ENCODE measurements at regions of chr15 and their contacts with region 1.

Region 1: DNA sequence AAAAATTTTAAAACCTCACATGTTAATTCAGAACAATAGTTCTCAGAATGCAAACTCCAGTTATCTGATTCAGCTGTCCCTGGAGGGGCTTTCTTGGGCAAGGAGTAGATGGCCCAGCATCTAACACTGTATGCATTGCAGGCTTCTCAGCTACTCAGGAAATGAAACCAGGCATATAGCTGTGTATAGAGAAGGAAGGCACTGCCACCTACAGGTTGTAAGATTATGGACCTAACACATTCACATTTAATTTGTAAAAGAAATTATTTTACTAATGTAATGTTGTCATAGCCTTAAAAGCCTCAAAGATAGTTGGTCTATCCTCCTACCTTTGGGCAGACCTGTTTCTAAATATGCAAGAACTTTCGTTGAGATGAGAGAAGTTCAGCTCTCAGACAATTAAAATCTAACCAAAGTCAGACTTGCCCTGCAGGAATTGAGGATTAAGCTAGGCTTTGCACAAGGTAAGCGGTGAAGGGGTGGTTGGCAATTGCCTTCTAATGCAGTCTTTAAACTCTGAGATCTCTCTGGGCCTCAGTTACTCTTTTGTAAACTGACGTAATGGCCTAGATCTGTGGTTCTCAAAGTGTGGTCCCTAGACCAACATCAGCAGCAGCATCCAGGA is 132.8 kb upstream of the SLC24A5 start:
- DNase-seq: no peak
- ATAC-seq: no peak
- H3K4me3 Mint-ChIP-seq: no peak overlapping the region
- H3K27ac Mint-ChIP-seq: no peak overlapping the region
- H3K4me1 Mint-ChIP-seq: no peaks in the 10 kb centered on the region
- H3K27me3 Mint-ChIP-seq: peaks cover 2% of the 10 kb centered on the region
- CTCF ChIP-seq: no peak

Region 2: DNA sequence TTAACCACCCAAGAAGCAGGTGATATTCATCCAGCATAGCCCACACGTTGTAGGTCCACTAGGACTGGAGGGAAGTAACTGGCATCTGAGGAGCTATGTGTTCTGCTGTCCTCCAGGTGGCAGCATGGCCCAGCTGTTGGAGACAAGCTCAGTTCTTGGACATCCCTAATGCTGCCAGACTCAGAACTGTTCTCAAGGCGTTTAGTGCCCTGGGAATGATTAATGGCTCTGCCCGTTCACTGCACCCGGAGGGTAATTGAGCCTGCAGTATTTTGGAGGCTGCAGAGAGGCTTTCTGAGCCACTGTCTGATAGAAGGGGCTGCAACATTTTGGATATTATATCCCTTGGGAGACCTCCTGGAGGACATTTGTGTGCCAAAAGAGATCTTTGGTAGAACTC is 792.0 kb before region 1 on chr15:
- CTCF ChIA-PET with region 1: interaction called, 23 read pairs
- POLR2A ChIA-PET with region 1: no interaction called
- intact Hi-C with region 1: no loop called
- DNase-seq: no peak
- ATAC-seq: no peak
- H3K4me3 Mint-ChIP-seq: no peak overlapping the region
- H3K27ac Mint-ChIP-seq: no peak overlapping the region
- H3K4me1 Mint-ChIP-seq: no peaks in the 10 kb centered on the region
- H3K27me3 Mint-ChIP-seq: no peaks in the 10 kb centered on the region
- CTCF ChIP-seq: no peak

Region 3: GRCh38 chr15:47975427-47975826 is 12.6 kb before region 1 on chr15:
- CTCF ChIA-PET with region 1: no interaction called
- POLR2A ChIA-PET with region 1: no interaction called
- intact Hi-C with region 1: no loop called
- DNase-seq: no peak
- ATAC-seq: no peak
- H3K4me3 Mint-ChIP-seq: no peak overlapping the region
- H3K27ac Mint-ChIP-seq: no peak overlapping the region
- H3K4me1 Mint-ChIP-seq: no peaks in the 10 kb centered on the region
- H3K27me3 Mint-ChIP-seq: peaks cover 3% of the 10 kb centered on the region
- CTCF ChIP-seq: no peak

Measured in activated B cell treated with CpG ODN at 0.5 μM for 24 hours (primary cell).